Stomach (tissue), 19 donors: ENCODE measurements at regions of chr12 and their contacts with region 1.

Region 1: DNA sequence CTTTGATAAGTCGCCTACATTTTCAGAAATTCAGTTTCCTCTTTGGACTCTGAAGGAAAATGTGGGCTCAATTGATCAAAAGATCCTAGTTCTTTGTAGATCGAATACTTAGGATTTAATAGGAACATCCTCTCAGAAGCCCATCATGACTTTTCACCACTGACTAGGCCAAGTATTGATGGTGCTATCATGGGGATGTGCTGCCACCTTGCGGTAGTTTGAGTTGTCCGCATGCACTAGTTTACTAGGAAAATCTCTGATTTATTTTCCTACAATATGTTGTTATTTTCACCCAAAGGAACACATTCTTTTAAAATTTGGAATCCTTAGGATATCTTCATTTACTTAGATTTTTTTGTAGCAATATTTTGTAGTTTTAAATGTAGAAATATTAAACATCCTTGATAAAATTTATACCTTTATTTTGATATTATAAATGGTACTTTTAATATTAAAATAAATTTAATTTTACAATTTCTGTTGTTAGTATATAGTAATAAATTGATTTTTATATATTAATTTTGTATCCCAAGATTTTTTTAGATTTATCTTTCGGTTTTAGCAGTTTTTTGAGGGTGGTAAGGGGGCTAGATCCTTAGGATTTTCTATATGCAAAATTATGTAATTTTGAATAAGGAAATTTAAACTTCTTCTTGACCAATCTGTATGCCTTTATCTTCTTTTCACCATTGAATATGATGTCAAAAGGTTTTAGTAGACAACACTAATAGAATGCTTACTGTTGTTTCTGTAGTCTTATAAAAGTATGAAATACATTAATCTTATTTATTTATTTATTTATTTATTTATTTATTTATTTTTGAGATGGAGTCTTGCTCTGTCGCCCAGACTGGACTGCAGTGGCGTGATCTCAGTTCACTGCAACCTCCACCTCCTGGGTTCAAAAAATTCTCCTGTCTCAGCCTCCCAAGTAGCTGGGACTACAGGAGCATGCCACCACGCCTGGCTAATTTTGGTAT is 52.9 kb upstream of the OR9K2 start:
- DNase-seq: peak; percentile 72 to 92
- H3K4me3 ChIP-seq: no peak overlapping the region
- H3K27ac ChIP-seq: no peak overlapping the region
- H3K4me1 ChIP-seq: no peaks in the 10 kb centered on the region
- H3K27me3 ChIP-seq: peaks cover 0 to 23% (median 0%) of the 10 kb centered on the region in 3 donors
- CTCF ChIP-seq: peak in 5 of 7 experiments; percentile 70 to 85 (median 78)
- EP300 ChIP-seq: no peak
- POLR2A ChIP-seq: no peak

Region 2: DNA sequence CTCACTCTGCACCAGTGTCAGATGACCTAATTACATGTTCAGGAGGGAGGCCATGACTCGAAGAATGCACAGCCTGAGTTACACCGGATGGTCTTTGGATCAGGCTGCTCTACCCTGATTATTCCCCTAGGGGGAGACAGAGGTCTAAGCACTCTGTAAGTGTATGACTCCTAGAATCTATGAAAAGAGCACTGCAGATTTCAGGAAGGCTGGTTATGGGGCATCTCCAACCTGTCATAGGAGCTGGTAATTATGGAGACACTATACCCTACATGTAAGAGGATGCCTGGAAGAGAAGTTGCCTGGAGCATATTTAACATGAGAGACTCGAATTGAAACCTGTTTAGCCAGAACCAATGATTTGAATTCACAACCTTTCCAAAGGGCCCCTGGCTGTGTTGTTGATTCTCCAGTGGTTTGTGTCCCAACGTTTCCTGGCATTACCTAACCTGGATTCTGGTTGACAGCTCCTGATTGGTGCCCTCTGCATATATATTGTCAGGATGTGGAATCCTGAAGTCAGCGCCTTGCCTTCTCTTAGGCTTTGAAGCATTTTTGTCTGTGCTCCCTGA is 219.3 kb before region 1 on chr12 and contains the start of gene MUCL1:
- intact Hi-C with region 1: no loop called
- DNase-seq: peak; percentile 69 to 71
- H3K4me3 ChIP-seq: no peak within 1 kb of the TSS
- H3K27ac ChIP-seq: no peak within 1 kb of the TSS
- H3K4me1 ChIP-seq: no peaks in the 10 kb centered on the region
- H3K27me3 ChIP-seq: no peaks in the 10 kb centered on the region
- CTCF ChIP-seq: peak in 5 of 7 experiments; percentile 59 to 78 (median 66)
- EP300 ChIP-seq: no peak
- POLR2A ChIP-seq: no peak
- total RNA-seq, gene MUCL1: not detected

Region 3: DNA sequence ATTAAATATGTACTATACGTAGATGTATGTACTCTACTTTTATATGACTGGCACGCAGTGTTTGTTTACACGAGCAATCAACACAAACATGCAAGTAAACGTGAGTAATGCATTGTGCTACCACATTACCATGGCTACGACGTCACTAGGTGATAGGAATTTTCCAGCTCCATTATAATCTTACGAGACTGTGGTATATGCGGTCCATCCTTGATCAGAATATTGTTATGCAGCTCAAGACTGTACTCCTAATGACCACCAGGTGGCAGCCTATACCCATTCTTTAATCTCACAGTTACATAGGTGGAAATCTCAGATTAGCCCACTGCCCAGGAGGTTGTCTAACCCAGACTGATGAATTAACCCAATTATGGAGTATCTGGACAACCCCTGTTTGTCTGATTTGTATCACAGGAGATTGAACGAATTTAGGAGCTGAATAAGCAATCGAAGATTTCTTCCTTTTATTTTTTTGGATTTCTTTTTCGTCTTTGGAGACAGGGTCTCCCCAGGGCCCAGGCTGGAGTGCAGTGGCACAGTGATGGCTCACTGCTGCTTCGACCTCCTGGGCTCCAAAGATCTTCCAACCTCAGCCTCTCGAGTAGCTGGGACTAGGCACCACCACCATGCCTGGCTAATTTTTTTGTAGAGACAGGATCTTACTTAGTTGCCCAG is 80.0 kb before region 1 on chr12:
- intact Hi-C with region 1: loop called (anchors 5 kb)
- DNase-seq: peak; percentile 42 to 86
- H3K4me3 ChIP-seq: no peak overlapping the region
- H3K27ac ChIP-seq: no peak overlapping the region
- H3K4me1 ChIP-seq: no peaks in the 10 kb centered on the region
- H3K27me3 ChIP-seq: peaks cover 0 to 7% (median 0%) of the 10 kb centered on the region in 3 donors
- CTCF ChIP-seq: peak in 5 of 7 experiments; percentile 78 to 92 (median 85)
- EP300 ChIP-seq: no peak
- POLR2A ChIP-seq: no peak